Endothelial cell of umbilical vein (primary cell): ENCODE measurements at regions of chr10 and their contacts with region 1.

Region 1: DNA sequence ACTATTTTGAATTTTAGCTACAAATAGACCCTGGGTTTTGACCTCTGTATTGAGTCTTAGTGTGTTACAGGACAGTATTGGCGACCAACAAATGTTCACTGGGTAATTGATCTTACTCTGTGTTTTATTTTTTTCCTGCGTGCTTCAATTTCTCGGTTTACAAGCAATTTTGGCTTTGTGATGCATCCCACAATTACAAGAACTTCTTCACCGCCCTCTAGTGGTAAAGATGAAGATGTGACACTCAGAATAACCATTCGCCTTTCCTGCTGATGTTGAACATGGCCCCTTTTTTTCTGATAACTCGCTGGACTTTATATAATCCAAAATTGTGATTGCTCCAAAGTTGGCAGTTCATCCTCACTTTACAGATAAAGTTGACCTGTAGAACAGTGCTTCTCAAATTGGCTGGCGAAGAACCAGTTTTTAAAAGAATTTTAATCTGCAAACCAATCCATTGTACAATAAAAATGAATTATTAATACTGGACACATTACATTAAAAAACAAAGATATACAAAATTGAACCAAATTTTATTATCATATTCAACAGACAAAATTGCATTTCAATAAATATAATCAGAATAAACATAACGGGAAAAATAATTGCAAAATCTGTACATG is 20.2 kb upstream of the SMC3 start:
- DNase-seq: peak; percentile 61
- H3K4me3 ChIP-seq: no peak overlapping the region
- H3K27ac ChIP-seq: no peak overlapping the region
- H3K4me1 ChIP-seq: peaks cover 13% of the 10 kb centered on the region
- H3K27me3 ChIP-seq: peaks cover 1 to 4% of the 10 kb centered on the region in 2 experiments
- CTCF ChIP-seq: peak; percentile 63 to 68
- POLR2A ChIP-seq: no peak

Region 2: DNA sequence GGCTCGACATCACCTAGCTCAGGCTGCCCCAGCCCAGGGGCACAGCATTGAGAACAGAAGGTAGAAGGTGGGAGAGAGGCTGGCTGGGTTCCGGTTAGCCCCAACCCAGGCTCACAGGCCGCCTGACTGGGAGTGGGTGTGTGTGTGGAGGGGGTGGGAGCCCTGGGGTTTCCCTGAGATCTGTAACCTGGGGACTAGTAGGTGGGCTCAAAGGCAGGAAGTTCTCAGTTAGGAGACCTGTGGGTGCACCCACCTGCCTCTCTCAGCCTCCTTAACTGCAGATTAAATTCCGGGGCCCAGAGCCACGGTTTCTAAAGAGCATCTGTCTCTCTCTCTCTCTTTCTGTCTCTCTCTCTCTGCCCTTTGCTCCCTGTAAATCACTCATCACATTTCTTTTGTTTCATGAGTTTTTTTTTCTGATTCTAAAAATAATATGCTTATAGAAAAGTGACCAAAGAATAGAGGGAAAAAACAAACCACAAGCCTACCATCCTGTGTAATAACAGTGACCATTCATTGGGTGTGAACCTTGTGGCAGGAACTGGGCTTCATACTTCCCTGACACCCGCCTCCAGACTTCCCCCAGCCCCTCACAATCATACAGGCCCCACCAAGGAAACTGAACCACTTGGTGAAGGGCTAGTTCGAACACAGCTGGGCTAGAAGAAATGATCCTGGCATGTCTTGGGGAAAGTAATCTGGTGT is 159.1 kb before region 1 on chr10:
- CTCF ChIA-PET with region 1: no interaction called
- POLR2A ChIA-PET with region 1: no interaction called
- dilution Hi-C with region 1: no loop called
- intact Hi-C with region 1: loop called (anchors 1 kb)
- DNase-seq: peak; percentile 90
- H3K4me3 ChIP-seq: no peak overlapping the region
- H3K27ac ChIP-seq: peak overlapping the region; percentile 69
- H3K4me1 ChIP-seq: peaks cover 33% of the 10 kb centered on the region
- H3K27me3 ChIP-seq: no peaks in the 10 kb centered on the region
- CTCF ChIP-seq: no peak
- POLR2A ChIP-seq: no peak

Region 3: GRCh38 chr10:110512461-110513187 is 34.6 kb before region 1 on chr10:
- CTCF ChIA-PET with region 1: interaction called, 13 read pairs
- POLR2A ChIA-PET with region 1: no interaction called
- dilution Hi-C with region 1: no loop called
- intact Hi-C with region 1: no loop called
- DNase-seq: peak; percentile 70
- H3K4me3 ChIP-seq: no peak overlapping the region
- H3K27ac ChIP-seq: peak overlapping the region; percentile 94
- H3K4me1 ChIP-seq: peaks cover 39% of the 10 kb centered on the region
- H3K27me3 ChIP-seq: no peaks in the 10 kb centered on the region
- CTCF ChIP-seq: no peak
- POLR2A ChIP-seq: no peak

Region 4: DNA sequence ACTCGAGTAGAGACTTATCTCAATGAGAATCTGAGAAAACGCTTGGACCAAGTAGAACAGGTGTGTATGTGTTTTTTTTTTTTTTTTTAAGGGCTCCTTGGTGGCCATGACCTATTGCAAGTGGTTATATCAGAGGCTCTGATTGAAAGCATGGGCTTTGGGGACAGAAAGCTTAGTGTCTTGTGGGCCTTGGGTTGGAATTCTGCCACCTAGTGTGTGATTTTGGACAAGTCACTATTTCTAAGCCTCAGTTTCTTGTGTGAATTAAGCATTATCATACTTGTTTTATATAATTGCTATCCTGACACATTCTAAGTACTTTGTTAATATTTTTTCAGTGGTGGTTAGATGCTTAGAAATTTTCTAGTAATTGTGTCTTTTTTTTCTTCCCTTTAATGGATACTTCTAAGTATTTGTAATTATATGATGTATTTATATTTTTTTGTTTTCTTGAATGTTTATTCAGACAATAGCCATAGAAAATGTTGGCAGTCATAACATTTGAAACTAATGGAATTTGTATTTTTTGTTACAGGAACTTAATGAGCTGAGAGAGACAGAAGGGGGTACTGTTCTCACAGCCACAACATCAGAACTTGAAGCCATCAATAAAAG is 53.3 kb after region 1 on chr10:
- CTCF ChIA-PET with region 1: no interaction called
- POLR2A ChIA-PET with region 1: no interaction called
- dilution Hi-C with region 1: no loop called
- intact Hi-C with region 1: loop called (anchors 1 kb)
- DNase-seq: peak; percentile 80
- H3K4me3 ChIP-seq: no peak overlapping the region
- H3K27ac ChIP-seq: no peak overlapping the region
- H3K4me1 ChIP-seq: peaks cover 6% of the 10 kb centered on the region
- H3K27me3 ChIP-seq: no peaks in the 10 kb centered on the region
- CTCF ChIP-seq: peak; percentile 42 to 59
- POLR2A ChIP-seq: no peak

Region 5: DNA sequence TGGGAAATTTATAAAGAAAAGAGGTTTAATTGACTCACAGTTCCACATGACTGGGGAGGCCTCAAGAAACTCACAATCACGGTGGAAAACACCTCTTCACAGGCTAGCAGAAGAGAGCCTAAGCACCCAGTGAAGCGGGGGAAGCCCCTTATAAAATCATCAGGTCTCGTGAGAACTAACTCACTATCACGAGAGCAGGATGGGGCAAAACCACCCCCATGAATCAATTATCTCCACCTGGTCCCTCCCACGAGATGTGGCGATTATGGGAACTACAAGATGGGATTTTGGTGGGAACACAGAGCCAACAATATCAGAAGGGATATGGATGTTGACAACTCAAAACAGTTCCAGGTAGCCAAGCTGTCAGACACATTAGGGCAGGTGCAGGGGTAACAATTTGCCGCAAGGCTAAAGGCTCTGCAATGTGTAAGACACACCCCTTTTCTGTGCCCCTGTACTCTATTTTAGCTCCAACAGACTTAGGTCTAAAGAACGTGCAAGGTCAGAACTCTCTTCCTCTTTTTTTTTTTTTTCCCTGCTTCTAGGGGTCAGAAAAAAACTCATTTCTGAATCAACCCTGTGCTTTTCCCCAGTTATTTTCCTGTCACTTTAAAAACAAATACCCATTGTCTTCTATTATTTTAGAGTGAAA is 66.2 kb after region 1 on chr10:
- CTCF ChIA-PET with region 1: no interaction called
- POLR2A ChIA-PET with region 1: no interaction called
- dilution Hi-C with region 1: no loop called
- intact Hi-C with region 1: no loop called
- DNase-seq: no peak
- H3K4me3 ChIP-seq: no peak overlapping the region
- H3K27ac ChIP-seq: no peak overlapping the region
- H3K4me1 ChIP-seq: no peaks in the 10 kb centered on the region
- H3K27me3 ChIP-seq: peaks cover 6 to 10% of the 10 kb centered on the region in 2 experiments
- CTCF ChIP-seq: no peak
- POLR2A ChIP-seq: no peak